PC-9 (cell line): ENCODE measurements at regions of chr12 and their contacts with region 1.

Region 1: DNA sequence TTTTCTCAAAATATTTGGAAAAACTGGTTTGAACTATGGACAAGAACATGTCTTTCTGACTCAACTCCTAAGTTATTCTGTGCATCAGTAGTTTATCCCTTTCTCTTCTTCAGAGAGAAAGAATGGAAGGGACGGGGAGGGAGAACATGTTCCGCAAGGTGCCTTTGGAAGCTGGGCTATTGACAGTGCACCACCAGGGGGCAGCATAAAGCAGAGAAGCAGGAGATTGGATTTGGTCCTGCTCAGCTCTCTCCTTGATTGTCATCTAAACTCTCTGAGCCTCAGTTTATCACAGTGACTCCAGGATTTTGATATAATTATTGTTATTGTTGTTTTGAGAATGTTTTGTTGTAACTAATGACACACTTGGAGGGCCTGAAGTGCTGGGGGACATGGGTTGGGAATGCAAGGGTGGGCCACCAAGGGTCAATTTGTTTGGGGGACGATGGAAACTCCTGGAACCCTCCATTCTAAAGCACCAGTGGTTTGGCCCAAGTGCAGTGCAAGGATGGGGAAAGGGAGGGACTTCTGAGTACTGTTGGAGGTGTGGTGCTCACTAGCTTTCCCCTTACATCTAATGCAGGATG is 45.3 kb upstream of the ANO6 start:
- DNase-seq: peak; percentile 36 to 69
- H3K4me3 ChIP-seq: no peak overlapping the region
- H3K27ac ChIP-seq: no peak overlapping the region
- H3K4me1 ChIP-seq: no peaks in the 10 kb centered on the region
- H3K27me3 ChIP-seq: no peaks in the 10 kb centered on the region
- CTCF ChIP-seq: peak; percentile 92

Region 2: GRCh38 chr12:45268672-45269411 is 98.3 kb after region 1 on chr12:
- CTCF ChIA-PET with region 1: no interaction called
- POLR2A ChIA-PET with region 1: no interaction called
- intact Hi-C with region 1: loop called (anchors 2 kb)
- DNase-seq: peak; percentile 77 to 91
- H3K4me3 ChIP-seq: peak overlapping the region; percentile 30; the same call in 1 of the 2 replicates
- H3K27ac ChIP-seq: peak overlapping the region; percentile 94
- H3K4me1 ChIP-seq: peaks cover 67% of the 10 kb centered on the region
- H3K27me3 ChIP-seq: no peaks in the 10 kb centered on the region
- CTCF ChIP-seq: peak; percentile 70

Region 3: DNA sequence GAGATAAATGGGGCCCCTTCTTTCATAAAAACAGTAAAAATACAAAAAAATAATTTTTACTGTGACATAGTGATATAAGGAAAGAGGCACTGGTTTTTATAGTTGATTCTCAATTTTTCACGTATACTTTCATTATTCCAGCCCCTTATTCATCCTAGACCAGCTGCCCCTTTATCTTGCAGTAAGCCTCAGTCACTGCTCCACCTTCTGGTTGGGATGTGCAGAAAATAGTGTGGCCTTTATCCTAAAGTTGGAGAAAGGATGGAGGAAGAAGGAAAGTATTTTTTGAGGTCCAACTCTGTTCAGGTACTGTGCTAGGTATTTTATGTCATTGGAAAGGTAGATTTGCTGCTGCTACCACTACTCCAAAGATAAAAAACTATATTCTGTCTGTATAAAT is 218.0 kb after region 1 on chr12:
- CTCF ChIA-PET with region 1: no interaction called
- POLR2A ChIA-PET with region 1: no interaction called
- intact Hi-C with region 1: loop called (anchors 1 kb)
- DNase-seq: no peak
- H3K4me3 ChIP-seq: no peak overlapping the region
- H3K27ac ChIP-seq: no peak overlapping the region
- H3K4me1 ChIP-seq: no peaks in the 10 kb centered on the region
- H3K27me3 ChIP-seq: no peaks in the 10 kb centered on the region
- CTCF ChIP-seq: peak; percentile 60

Region 4: GRCh38 chr12:45532113-45532512 is 361.6 kb after region 1 on chr12:
- CTCF ChIA-PET with region 1: no interaction called
- POLR2A ChIA-PET with region 1: no interaction called
- intact Hi-C with region 1: loop called (anchors 5 kb)
- DNase-seq: no peak
- H3K4me3 ChIP-seq: no peak overlapping the region
- H3K27ac ChIP-seq: no peak overlapping the region
- H3K4me1 ChIP-seq: no peaks in the 10 kb centered on the region
- H3K27me3 ChIP-seq: no peaks in the 10 kb centered on the region
- CTCF ChIP-seq: no peak

Region 5: GRCh38 chr12:45568808-45569207 is 398.3 kb after region 1 on chr12:
- CTCF ChIA-PET with region 1: no interaction called
- POLR2A ChIA-PET with region 1: no interaction called
- intact Hi-C with region 1: no loop called
- DNase-seq: no peak
- H3K4me3 ChIP-seq: no peak overlapping the region
- H3K27ac ChIP-seq: no peak overlapping the region
- H3K4me1 ChIP-seq: peaks cover 30% of the 10 kb centered on the region
- H3K27me3 ChIP-seq: no peaks in the 10 kb centered on the region
- CTCF ChIP-seq: no peak

Region 6: DNA sequence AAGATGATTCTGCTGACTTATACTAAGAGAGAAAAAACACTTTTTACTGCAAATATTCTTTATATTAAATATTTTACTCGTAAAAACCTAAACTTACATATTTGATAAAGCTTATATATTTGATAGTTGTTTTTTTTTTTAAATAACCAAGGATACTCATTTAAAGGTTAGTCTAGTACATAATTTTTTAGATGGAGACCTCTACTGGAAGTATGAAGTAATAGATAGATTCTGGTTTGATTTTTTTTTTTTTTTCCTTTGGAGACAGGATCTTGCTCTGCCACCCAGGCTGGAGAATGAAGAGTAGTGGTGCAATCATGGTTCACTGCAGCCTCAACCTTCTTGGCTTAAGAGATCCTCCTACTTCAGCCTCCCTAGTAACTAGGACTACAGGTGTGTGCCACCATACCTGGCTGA is 575.3 kb after region 1 on chr12:
- CTCF ChIA-PET with region 1: no interaction called
- POLR2A ChIA-PET with region 1: no interaction called
- intact Hi-C with region 1: loop called (anchors 5 kb)
- DNase-seq: peak in 1 of 2 experiments; percentile 42
- H3K4me3 ChIP-seq: no peak overlapping the region
- H3K27ac ChIP-seq: no peak overlapping the region
- H3K4me1 ChIP-seq: peaks cover 14% of the 10 kb centered on the region; the same call in 1 of the 2 replicates
- H3K27me3 ChIP-seq: no peaks in the 10 kb centered on the region
- CTCF ChIP-seq: peak; percentile 58